ENCODE measurements at regions of chr19 and their contacts with region 1.

Region 1: DNA sequence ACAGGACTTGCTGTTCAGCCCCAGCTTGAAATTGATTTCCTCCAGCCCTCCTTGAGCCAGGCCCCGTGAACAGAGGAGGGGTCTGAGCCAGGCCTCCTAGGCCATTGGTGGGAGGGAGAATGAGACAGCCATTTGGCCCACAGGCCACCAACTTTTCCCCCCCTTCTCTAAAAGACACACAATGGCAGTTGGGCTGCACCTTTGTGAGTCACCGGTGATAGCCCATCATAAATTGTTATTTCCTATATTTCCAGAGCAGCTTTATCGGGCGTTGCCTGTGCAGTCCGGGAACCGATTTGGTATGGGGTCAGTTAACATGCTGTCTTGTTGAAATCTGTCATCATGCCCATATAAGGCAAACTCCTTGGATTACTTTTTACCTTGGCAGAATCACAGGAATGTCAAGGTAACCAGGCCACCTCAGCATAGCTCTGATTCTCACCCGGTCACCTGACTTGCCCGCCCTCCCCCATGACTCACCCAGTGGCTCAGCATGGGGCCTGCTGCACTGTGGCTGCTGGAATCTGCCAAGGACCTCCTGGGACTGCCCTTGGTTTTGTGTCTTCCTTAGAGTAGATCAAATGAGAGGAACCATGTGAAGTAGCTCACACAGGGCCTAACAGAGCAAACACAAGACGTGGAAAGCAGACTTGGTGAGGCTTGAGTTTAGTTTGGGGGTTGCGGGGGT is 36.1 kb downstream of the ACTN4 start:
- DNase-seq: peak; percentile 99
- ATAC-seq: peak; percentile 74
- H3K4me3 ChIP-seq: peak overlapping the region; percentile 36 to 53
- H3K27ac ChIP-seq: peak overlapping the region; percentile 98
- H3K4me1 ChIP-seq: peaks cover 82 to 99% of the 10 kb centered on the region in 2 experiments
- H3K27me3 ChIP-seq: no peaks in the 10 kb centered on the region
- CTCF ChIP-seq: no peak
- POLR2A ChIP-seq: no peak
- RAD21 ChIP-seq: no peak; the same call in none of the 2 replicates

Region 2: DNA sequence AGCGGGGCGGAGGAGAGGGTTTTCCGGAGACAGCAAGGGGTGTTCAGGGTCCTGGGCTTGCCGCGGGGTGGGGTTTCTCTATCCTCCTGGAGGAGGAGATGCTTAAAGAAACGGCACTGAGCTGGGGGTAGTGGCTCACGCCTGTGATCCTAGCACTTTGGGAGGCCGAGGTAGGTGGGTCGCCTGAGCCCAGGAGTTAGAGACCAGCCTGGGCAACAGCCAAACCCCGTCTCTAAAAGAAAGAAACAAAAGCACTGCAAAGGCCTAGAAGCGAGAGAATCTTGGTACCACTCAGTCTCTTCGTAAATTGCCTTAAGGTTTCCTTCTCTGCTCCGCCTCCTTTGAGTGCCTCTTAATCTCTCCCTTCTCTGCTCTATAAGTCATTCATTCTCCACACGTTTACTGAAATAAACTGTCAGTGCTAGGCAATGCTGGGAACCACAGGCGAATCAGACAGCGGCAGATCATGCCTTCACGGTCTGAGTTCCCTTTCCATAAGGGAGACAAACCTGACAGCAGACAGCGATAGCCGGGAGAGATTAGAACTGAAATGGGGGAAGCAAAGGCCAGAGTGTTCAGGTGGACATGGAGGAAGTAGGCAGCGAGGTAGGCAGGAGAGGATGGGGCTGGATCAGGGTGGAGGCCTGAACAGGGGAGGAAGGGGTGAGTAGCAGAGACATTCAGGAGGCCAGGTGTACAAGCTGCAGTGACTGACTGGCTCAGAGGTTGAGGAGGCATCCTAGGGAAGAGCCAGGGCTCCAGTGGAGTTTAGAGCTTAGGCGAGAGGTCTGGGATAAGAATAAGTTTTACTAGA is 64.0 kb before region 1 on chr19:
- CTCF ChIA-PET with region 1: no interaction called
- POLR2A ChIA-PET with region 1: no interaction called
- RAD21 ChIA-PET with region 1: no interaction called
- intact Hi-C with region 1: no loop called
- DNase-seq: no peak
- ATAC-seq: peak; percentile 24
- H3K4me3 ChIP-seq: peak overlapping the region; percentile 98 to 99
- H3K27ac ChIP-seq: peak overlapping the region; percentile 62
- H3K4me1 ChIP-seq: peaks cover 7 to 24% of the 10 kb centered on the region in 2 experiments
- H3K27me3 ChIP-seq: no peaks in the 10 kb centered on the region
- CTCF ChIP-seq: no peak
- POLR2A ChIP-seq: no peak
- RAD21 ChIP-seq: no peak

Region 3: DNA sequence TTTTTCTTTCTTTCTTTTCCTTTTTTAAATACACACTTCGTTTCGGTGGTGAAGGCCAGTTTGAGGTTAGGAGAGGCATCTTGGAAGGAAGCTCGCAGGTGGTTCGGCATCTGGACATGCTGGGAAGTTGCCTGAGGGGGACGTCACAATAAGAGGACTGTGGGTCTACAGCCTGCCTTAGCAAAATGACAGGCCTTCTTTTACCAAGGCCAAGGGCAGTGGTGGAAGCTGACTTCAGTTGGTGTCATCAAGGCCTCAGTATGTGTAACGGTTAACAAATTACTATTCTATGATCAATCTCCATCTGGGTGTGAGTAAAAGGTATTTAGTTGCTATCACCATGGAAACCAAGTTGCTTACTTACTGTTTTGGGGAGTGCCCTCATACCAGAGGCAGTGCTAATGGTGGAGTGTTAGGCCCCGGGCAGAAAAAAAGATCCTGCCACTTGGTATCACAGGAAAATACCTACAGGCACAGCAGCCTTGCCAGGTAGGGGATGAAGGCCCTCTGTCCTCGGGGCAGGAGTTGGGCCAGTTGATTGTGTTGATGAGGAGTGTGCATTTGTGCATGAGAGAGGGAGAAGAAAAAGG is 25.8 kb before region 1 on chr19:
- CTCF ChIA-PET with region 1: no interaction called
- POLR2A ChIA-PET with region 1: interaction called, 9 read pairs
- RAD21 ChIA-PET with region 1: no interaction called
- intact Hi-C with region 1: loop called (anchors 2 kb)
- DNase-seq: peak; percentile 71
- ATAC-seq: peak; percentile 14
- H3K4me3 ChIP-seq: peak overlapping the region; percentile 15 to 37
- H3K27ac ChIP-seq: peak overlapping the region; percentile 72
- H3K4me1 ChIP-seq: peaks cover 96 to 97% of the 10 kb centered on the region in 2 experiments
- H3K27me3 ChIP-seq: no peaks in the 10 kb centered on the region
- CTCF ChIP-seq: no peak
- POLR2A ChIP-seq: no peak
- RAD21 ChIP-seq: no peak

Region 4: DNA sequence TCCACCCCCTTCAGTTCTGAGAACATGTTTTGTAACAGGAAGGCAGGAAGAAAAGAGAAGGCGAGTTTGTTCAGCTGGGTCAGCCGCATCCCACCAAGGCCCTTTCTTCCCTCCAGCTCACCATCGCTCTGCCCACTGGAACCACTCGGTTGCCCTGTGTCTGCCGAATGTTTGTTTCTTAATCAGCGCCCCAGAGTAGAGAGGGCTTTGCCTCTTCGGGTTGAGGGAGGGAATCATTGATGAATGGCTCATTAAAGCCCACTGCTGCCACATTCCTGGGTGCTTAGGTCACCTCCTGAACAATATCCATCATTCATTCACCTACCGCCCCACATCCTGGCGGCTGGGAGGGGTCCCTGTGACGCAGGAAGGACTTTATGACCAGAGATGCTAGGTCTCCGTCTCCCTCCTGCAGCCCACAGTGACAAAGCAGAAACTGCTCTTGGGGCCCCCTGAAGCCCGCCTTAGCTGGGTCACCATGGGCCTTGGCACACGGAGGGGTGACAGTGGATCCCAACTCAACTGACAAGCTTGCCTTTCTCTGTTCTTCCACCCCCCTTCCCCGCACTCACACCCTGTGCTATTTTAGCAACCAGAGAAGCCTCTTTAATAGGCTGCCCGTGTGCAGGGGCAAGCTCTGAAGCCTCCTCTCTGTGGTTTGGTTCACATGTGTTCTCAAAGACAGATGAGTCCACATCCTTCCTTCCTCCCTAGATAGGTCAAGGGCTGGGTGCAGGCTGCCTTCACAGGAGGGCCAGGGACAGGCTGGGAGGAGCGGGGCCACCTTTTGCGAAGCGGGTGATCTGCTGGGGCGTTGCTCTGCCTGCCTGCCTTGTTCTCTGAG is 10.1 kb after region 1 on chr19:
- CTCF ChIA-PET with region 1: interaction called, 4 read pairs
- POLR2A ChIA-PET with region 1: interaction called, 25 read pairs
- RAD21 ChIA-PET with region 1: no interaction called
- intact Hi-C with region 1: loop called (anchors 1 kb)
- DNase-seq: peak; percentile 91
- ATAC-seq: peak; percentile 72
- H3K4me3 ChIP-seq: peak overlapping the region; percentile 30 to 48
- H3K27ac ChIP-seq: peak overlapping the region; percentile 96
- H3K4me1 ChIP-seq: peaks cover 60 to 96% of the 10 kb centered on the region in 2 experiments
- H3K27me3 ChIP-seq: no peaks in the 10 kb centered on the region
- CTCF ChIP-seq: no peak
- POLR2A ChIP-seq: no peak
- RAD21 ChIP-seq: no peak; the same call in 1 of the 2 replicates

Region 5: DNA sequence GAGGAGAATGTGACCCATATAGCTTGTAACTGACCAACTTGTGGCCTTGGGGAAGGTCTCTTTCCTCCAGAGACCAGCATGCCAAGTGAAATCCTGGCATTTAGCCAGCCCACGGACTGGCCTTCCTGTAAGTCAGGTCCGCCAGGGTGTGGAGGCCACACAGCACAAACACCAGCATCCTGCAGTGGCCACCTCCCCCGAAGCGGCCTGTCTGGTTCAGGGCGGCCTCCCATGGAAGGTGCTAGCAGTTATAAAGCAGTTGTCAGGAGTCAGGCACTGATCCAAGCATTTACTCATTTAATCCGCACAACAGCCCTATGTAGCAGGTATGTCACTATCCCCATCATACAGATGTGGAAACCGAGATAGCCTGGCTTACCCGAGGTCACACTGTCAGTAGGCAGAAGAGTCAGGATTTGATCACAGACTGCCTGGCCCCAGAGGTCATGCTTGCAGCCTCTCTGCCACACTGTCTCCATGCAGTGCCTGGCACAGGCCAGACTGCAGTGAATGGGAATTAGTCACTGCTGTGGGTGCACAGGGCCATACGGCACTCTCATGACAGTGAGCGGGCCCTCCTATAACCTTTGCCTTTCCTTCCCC is 24.1 kb after region 1 on chr19:
- CTCF ChIA-PET with region 1: no interaction called
- POLR2A ChIA-PET with region 1: no interaction called
- RAD21 ChIA-PET with region 1: no interaction called
- intact Hi-C with region 1: no loop called
- DNase-seq: no peak
- ATAC-seq: no peak
- H3K4me3 ChIP-seq: no peak overlapping the region
- H3K27ac ChIP-seq: peak overlapping the region; percentile 24; the same call in 1 of the 2 replicates
- H3K4me1 ChIP-seq: no peaks in the 10 kb centered on the region
- H3K27me3 ChIP-seq: no peaks in the 10 kb centered on the region
- CTCF ChIP-seq: no peak
- POLR2A ChIP-seq: no peak
- RAD21 ChIP-seq: no peak